ENCODE measurements at regions of chr3 and their contacts with region 1.

Region 1: DNA sequence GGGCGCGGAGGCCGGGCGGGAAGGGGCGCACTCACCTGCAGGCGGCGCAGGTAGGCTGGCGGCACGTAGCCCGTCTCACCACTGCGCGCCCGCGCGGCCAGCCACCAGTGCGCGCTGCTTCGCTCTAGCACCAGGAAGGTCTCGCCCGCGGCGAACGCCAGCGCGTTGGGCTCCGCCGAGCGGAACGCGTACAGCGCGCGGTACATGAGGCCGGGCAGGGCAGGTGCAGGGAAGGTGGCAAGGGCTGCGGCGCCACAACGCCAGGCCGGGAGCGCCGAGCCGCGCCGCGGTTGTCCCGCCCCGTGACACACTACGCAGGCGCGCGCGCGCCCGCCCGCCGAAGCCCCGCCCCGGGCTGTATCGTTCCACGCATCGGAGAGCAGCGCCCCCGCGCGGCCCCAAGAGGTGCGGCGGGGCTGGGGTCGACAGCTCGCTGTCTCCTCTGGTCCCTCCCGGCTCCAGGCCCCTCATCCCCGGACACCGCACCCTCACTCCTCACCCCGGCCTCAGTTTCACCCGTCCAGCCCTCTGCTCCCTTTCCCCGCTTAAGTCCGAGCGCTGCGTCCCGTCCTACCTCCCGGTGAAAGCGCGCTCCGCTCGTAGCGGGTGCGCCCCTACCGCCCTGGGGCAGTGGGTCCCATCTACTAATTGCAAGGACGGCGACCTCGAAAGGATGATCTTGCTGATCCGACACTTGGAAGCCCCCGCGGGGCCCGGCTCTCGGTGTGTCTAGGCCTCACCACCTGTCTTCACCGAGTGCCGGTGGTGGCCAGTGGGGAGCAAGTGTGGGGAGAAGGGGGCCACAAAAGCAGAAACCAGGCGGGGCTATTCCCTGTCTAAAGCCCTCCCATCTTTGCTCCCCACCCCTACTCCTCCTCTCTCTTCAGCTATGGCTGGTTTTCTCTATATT is at the start of gene NCKIPSD:
- DNase-seq: peak; percentile 96
- ATAC-seq: peak; percentile 94
- H3K4me3 Mint-ChIP-seq: peak within 1 kb of the TSS; percentile 82
- H3K27ac Mint-ChIP-seq: peak within 1 kb of the TSS; percentile 68
- H3K4me1 Mint-ChIP-seq: peaks cover 16% of the 10 kb centered on the region
- H3K27me3 Mint-ChIP-seq: no peaks in the 10 kb centered on the region
- total RNA-seq, gene NCKIPSD: 61.0 to 67.3 TPM

Region 2: GRCh38 chr3:47365213-47366153 is 1320.4 kb before region 1 on chr3:
- CTCF ChIA-PET with region 1: no interaction called
- POLR2A ChIA-PET with region 1: no interaction called
- intact Hi-C with region 1: no loop called
- DNase-seq: no peak
- ATAC-seq: no peak
- H3K4me3 Mint-ChIP-seq: no peak overlapping the region
- H3K27ac Mint-ChIP-seq: no peak overlapping the region
- H3K4me1 Mint-ChIP-seq: peaks cover 10% of the 10 kb centered on the region
- H3K27me3 Mint-ChIP-seq: peaks cover 2% of the 10 kb centered on the region

Region 3: GRCh38 chr3:48635222-48636021 is 50.4 kb before region 1 on chr3 and contains the start of gene SLC26A6:
- CTCF ChIA-PET with region 1: interaction called, 3 read pairs
- POLR2A ChIA-PET with region 1: no interaction called
- intact Hi-C with region 1: loop called in 1 of 2 experiments (anchors 1 kb)
- DNase-seq: peak; percentile 97
- ATAC-seq: peak; percentile 97
- H3K4me3 Mint-ChIP-seq: peak within 1 kb of the TSS; percentile 84
- H3K27ac Mint-ChIP-seq: peak within 1 kb of the TSS; percentile 76
- H3K4me1 Mint-ChIP-seq: peaks cover 13% of the 10 kb centered on the region
- H3K27me3 Mint-ChIP-seq: no peaks in the 10 kb centered on the region
- total RNA-seq, gene SLC26A6: 35.0 to 38.5 TPM

Region 4: GRCh38 chr3:48663415-48664312 is 22.2 kb before region 1 on chr3:
- CTCF ChIA-PET with region 1: interaction called, 5 read pairs
- POLR2A ChIA-PET with region 1: interaction called, 3 read pairs
- intact Hi-C with region 1: loop called in 1 of 2 experiments (anchors 1 kb)
- DNase-seq: peak; percentile 96
- ATAC-seq: peak; percentile 91
- H3K4me3 Mint-ChIP-seq: peak overlapping the region; percentile 81
- H3K27ac Mint-ChIP-seq: peak overlapping the region; percentile 93
- H3K4me1 Mint-ChIP-seq: peaks cover 16% of the 10 kb centered on the region
- H3K27me3 Mint-ChIP-seq: peaks cover 28% of the 10 kb centered on the region

Region 5: GRCh38 chr3:48826451-48826850 is 140.6 kb after region 1 on chr3:
- CTCF ChIA-PET with region 1: no interaction called
- POLR2A ChIA-PET with region 1: no interaction called
- intact Hi-C with region 1: no loop called
- DNase-seq: no peak
- ATAC-seq: no peak
- H3K4me3 Mint-ChIP-seq: no peak overlapping the region
- H3K27ac Mint-ChIP-seq: no peak overlapping the region
- H3K4me1 Mint-ChIP-seq: peaks cover 9% of the 10 kb centered on the region
- H3K27me3 Mint-ChIP-seq: no peaks in the 10 kb centered on the region